H1 (cell line): ENCODE measurements at regions of chr2 and their contacts with region 1.

Region 1: DNA sequence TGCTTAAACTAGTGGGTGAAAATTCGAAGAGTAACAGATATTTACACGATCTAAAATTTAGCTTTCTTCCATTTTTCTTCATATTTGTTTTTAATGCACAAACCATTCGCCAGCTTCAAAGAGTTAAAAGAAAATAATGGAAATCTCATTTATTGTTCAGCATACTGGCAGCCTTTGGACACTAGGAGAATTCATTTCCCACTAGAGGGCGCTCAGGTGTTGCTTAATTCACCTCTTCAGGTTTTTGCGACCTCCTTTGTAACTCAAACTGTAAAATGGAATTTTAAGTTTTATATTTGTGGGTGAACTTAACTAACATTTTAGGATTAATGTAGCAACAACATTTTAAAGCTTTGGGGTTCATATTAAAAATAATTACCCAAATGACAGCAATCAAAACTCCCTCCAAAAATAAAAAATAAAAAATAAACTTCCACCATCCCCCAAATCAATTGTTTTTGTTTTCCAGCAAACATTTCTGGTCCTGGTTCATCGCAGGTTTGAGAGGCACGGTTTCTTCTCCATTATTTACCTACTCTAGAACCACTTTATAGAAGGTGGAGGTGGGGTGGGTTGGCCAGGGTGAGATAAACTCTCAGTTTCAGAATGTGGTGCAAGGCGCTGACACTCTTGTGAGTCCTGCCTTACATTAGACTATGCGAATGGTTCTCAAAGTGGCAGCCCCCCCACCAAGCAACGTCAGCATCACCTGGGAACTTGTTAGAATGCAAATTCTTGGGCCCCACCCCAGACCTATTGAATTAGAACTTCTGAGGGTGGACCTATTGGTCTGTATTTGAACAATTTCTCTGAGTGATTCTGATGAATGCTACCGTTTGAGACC is 24.7 kb upstream of the PNPT1 start:
- DNase-seq: peak; percentile 5 to 61
- H3K4me3 ChIP-seq: no peak overlapping the region
- H3K27ac ChIP-seq: no peak overlapping the region
- H3K4me1 ChIP-seq: peaks cover 0 to 12% (median 4%) of the 10 kb centered on the region in 4 experiments; a peak in 4 of 7 replicates
- H3K27me3 ChIP-seq: no peaks in the 10 kb centered on the region
- CTCF ChIP-seq: peak in 2 of 3 experiments; percentile 67 to 74; a peak in 3 of 4 replicates
- EP300 ChIP-seq: no peak
- POLR2A ChIP-seq: no peak
- RAD21 ChIP-seq: peak; percentile 89 to 90

Region 2: DNA sequence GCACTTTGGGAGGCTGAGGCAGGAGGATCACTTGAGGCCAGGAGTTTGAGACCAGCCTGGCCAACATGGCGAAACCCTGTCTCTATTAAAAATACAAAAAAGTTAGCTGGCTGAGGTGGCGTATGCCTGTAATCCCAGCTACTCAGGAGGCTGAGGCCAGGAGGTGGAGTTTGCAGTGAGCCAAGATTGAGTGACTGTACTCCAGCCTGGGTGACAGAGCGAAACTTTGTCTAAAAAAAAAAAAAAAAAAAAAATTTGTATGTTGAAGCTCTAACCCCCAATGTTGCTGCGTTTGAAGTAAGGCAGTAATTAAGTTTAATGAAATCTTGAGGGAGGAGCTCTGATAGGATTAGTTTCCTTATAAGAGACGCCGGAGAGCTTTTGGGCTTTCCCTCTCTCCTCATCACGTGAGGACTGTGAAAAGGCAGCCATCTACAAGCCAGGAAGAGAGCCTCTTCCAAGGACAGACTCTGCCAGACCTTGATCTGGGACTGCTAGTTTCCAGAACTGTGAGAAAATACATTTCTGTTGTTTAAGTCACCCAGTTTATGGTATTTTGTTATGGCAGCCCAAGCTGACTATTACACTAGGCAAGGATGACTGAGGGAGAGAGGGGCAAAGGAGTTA is 13.2 kb before region 1 on chr2:
- CTCF ChIA-PET with region 1: interaction called, 27 read pairs
- POLR2A ChIA-PET with region 1: no interaction called
- DNase-seq: no peak
- H3K4me3 ChIP-seq: no peak overlapping the region
- H3K27ac ChIP-seq: no peak overlapping the region
- H3K4me1 ChIP-seq: no peaks in the 10 kb centered on the region
- H3K27me3 ChIP-seq: no peaks in the 10 kb centered on the region
- CTCF ChIP-seq: no peak
- EP300 ChIP-seq: no peak
- POLR2A ChIP-seq: no peak
- RAD21 ChIP-seq: no peak

Region 3: GRCh38 chr2:55732854-55733253 is 14.5 kb after region 1 on chr2:
- CTCF ChIA-PET with region 1: interaction called, 17 read pairs
- POLR2A ChIA-PET with region 1: no interaction called
- DNase-seq: no peak
- H3K4me3 ChIP-seq: no peak overlapping the region
- H3K27ac ChIP-seq: no peak overlapping the region
- H3K4me1 ChIP-seq: no peaks in the 10 kb centered on the region
- H3K27me3 ChIP-seq: no peaks in the 10 kb centered on the region
- CTCF ChIP-seq: no peak
- EP300 ChIP-seq: no peak
- POLR2A ChIP-seq: no peak
- RAD21 ChIP-seq: no peak

Region 4: GRCh38 chr2:55771612-55772011 is 53.2 kb after region 1 on chr2:
- CTCF ChIA-PET with region 1: interaction called, 20 read pairs
- POLR2A ChIA-PET with region 1: no interaction called
- DNase-seq: no peak
- H3K4me3 ChIP-seq: no peak overlapping the region
- H3K27ac ChIP-seq: no peak overlapping the region
- H3K4me1 ChIP-seq: no peaks in the 10 kb centered on the region
- H3K27me3 ChIP-seq: no peaks in the 10 kb centered on the region
- CTCF ChIP-seq: peak in 2 of 3 experiments; percentile 20 to 35; a peak in 2 of 4 replicates
- EP300 ChIP-seq: no peak
- POLR2A ChIP-seq: no peak
- RAD21 ChIP-seq: peak in 1 of 2 experiments; percentile 66; a peak in 3 of 4 replicates

Region 5: DNA sequence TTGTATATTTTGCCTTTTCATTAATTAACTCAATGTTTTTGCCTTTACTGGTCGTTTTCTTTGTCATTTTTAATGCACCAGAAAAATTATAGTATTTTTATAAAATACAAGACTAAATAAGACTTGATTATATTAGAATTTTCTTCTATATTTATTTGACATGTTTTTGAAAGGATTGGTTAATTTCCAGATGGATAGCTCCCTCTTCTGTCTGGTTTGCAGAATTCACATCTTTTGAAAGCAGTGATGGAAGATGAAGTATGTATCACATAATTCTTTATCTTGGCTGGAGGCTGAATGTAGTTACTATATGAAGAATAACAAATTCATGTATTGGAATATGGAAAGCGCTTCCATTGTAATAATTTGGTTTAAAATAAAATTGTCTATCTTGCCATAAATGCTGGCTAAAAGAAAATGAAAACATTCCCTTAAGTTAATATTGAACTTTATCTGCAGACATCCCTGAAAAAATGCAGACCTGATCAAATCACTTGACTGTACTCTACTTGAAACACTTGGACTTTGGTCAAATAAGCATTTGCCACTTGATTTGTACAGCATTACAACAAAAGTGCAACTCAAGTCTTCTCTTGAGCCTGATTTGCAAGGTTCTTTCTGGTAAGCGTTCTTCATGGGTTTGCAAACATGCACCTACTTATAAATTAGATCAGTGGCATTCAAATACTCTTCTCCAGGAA is 291.5 kb after region 1 on chr2:
- CTCF ChIA-PET with region 1: interaction called, 20 read pairs
- POLR2A ChIA-PET with region 1: interaction called, 4 read pairs
- DNase-seq: no peak
- H3K4me3 ChIP-seq: no peak overlapping the region
- H3K27ac ChIP-seq: no peak overlapping the region
- H3K4me1 ChIP-seq: peaks cover 4 to 12% (median 7%) of the 10 kb centered on the region in 4 experiments; a peak in 6 of 7 replicates
- H3K27me3 ChIP-seq: no peaks in the 10 kb centered on the region
- CTCF ChIP-seq: peak in 1 of 3 experiments; percentile 42; a peak in 2 of 4 replicates
- EP300 ChIP-seq: no peak
- POLR2A ChIP-seq: no peak
- RAD21 ChIP-seq: peak; percentile 62 to 72